ENCODE measurements at regions of chr14 and their contacts with region 1.

Region 1: DNA sequence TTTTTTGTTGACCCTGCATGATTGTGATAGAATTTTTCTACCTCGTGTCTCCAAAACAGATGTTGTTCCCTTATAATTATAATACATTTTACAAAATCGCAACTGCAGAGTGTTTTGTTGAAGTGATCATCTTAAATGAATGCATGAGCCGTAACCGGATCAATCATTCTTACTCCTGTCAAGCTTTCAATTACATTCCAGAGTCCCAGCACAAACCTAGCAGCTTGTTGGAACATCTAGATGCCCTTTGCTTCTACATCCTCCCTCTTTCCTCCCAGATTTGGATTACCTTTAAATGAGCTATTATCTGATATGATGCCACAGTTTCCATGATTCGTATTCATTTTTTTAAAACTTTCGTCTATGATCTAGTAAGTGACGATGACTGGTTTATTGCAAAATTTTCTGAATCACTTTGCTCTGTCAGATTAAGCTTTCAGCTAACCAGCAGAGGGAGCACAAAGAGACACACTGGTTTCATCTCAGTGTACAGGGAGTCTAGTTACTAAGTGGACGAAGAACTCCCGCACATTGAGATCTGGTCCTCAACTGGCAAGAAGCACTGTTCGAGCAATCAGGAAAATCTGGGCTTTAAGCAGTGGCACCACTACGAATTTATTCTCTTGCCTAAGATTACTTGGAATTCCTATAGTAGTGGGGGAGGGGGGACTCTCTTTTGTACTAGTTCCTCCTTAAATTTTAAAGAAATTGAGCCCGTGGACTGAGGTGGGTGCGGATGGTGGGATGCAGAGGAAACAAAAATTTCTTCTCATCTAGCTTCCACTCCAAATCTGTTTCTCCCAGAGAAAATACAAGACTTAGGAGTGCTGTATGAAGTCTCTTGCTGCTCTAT is 40.9 kb downstream of the TSHR start:
- DNase-seq: peak; percentile 82
- H3K4me3 ChIP-seq: no peak overlapping the region
- H3K27ac ChIP-seq: no peak overlapping the region
- H3K4me1 ChIP-seq: peaks cover 6% of the 10 kb centered on the region
- CTCF ChIP-seq: peak; percentile 93

Region 2: GRCh38 chr14:81062816-81063215 is 66.5 kb after region 1 on chr14:
- CTCF ChIA-PET with region 1: no interaction called
- POLR2A ChIA-PET with region 1: interaction called, 3 read pairs
- intact Hi-C with region 1: loop called (anchors 5 kb)
- DNase-seq: peak; percentile 72
- H3K4me3 ChIP-seq: no peak overlapping the region
- H3K27ac ChIP-seq: no peak overlapping the region
- H3K4me1 ChIP-seq: no peaks in the 10 kb centered on the region
- CTCF ChIP-seq: peak; percentile 87

Region 3: GRCh38 chr14:81170104-81170828 is 174.0 kb after region 1 on chr14:
- CTCF ChIA-PET with region 1: interaction called, 8 read pairs
- POLR2A ChIA-PET with region 1: interaction called, 8 read pairs
- intact Hi-C with region 1: loop called (anchors 1 kb)
- DNase-seq: peak; percentile 87
- H3K4me3 ChIP-seq: peak overlapping the region; percentile 62
- H3K27ac ChIP-seq: peak overlapping the region; percentile 62
- H3K4me1 ChIP-seq: peaks cover 46% of the 10 kb centered on the region
- CTCF ChIP-seq: peak; percentile 97

Region 4: GRCh38 chr14:81211844-81212243 is 215.6 kb after region 1 on chr14:
- CTCF ChIA-PET with region 1: no interaction called
- POLR2A ChIA-PET with region 1: no interaction called
- intact Hi-C with region 1: loop called (anchors 5 kb)
- DNase-seq: peak; percentile 37
- H3K4me3 ChIP-seq: no peak overlapping the region
- H3K27ac ChIP-seq: no peak overlapping the region
- H3K4me1 ChIP-seq: peaks cover 25% of the 10 kb centered on the region
- CTCF ChIP-seq: peak; percentile 68

Region 5: GRCh38 chr14:81453166-81453766 is 457.0 kb after region 1 on chr14:
- CTCF ChIA-PET with region 1: no interaction called
- POLR2A ChIA-PET with region 1: no interaction called
- intact Hi-C with region 1: loop called (anchors 5 kb)
- DNase-seq: peak; percentile 66
- H3K4me3 ChIP-seq: no peak overlapping the region
- H3K27ac ChIP-seq: no peak overlapping the region
- H3K4me1 ChIP-seq: peaks cover 22% of the 10 kb centered on the region
- CTCF ChIP-seq: peak; percentile 91

Measured in OCI-LY7 (cell line).